GM13976 (cell line): ENCODE measurements at regions of chr1 and their contacts with region 1.

Region 1: GRCh38 chr1:167273027-167273800 is 52.5 kb downstream of the POU2F1 start:
- DNase-seq: no peak
- CTCF ChIP-seq: no peak

Region 2: GRCh38 chr1:167533851-167534300 is 260.7 kb after region 1 on chr1:
- in situ Hi-C with region 1: loop called (anchors 25 kb)
- DNase-seq: peak; percentile 80
- CTCF ChIP-seq: peak; percentile 68